Activated B cell treated with CpG ODN at 0.5 μM for 24 hours (primary cell): ENCODE measurements at regions of chr13 and their contacts with region 1.

Region 1: DNA sequence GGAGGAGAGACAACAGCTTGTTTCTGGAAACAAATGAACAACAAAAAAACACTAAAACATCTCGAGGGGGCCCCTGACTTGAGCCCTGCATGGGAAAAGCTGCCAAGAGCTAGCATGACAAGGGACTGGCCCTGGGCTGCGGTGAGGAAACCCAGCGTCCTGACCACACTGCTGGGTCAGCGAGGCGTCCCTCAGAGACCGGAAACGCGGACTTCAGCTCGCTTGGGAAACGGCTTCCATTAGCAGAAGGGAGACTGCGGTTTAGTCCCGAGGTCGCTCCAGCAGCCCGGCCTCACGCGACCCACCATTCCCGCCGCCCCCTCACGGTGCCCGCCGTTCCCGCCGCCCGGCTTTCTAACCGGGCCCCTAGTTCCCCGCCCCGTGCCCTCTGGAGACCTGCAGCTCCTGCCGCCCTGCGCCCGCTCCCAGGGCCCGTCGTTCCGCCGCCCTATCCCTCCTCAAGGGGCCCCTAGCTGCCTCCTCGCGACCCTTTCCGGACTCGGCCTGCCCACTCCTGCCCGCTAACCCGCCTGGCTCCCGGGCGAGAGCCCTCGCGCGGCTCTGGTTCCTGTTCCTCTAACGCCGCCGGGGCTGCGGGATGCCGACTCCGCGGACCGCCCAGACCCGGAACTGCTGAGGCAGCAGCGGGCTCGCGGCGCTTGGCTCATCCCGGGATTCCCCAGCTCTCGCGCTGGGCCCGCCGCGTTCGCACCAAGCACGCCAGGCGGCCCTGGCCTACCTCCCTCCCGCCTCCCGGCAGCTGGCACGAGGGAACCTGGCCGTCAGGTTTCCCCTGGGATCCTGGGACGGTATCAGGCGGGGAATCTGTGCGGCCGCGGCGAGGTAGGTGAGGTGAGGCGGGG is at the start of gene CCDC122:
- DNase-seq: peak; percentile 83
- ATAC-seq: peak; percentile 86
- H3K4me3 Mint-ChIP-seq: peak within 1 kb of the TSS; percentile 93
- H3K27ac Mint-ChIP-seq: peak within 1 kb of the TSS; percentile 93
- H3K4me1 Mint-ChIP-seq: peaks cover 32% of the 10 kb centered on the region
- H3K27me3 Mint-ChIP-seq: no peaks in the 10 kb centered on the region
- CTCF ChIP-seq: no peak
- total RNA-seq, gene CCDC122: 7.1 and 8.0 TPM in 2 replicates

Region 2: GRCh38 chr13:42048682-42049453 is 1830.3 kb before region 1 on chr13:
- CTCF ChIA-PET with region 1: no interaction called
- POLR2A ChIA-PET with region 1: no interaction called
- intact Hi-C with region 1: loop called (anchors 5 kb)
- DNase-seq: peak; percentile 50
- ATAC-seq: peak; percentile 76
- H3K4me3 Mint-ChIP-seq: peak overlapping the region; percentile 85
- H3K27ac Mint-ChIP-seq: no peak overlapping the region
- H3K4me1 Mint-ChIP-seq: peaks cover 12% of the 10 kb centered on the region
- H3K27me3 Mint-ChIP-seq: peaks cover 34% of the 10 kb centered on the region
- CTCF ChIP-seq: no peak

Region 3: DNA sequence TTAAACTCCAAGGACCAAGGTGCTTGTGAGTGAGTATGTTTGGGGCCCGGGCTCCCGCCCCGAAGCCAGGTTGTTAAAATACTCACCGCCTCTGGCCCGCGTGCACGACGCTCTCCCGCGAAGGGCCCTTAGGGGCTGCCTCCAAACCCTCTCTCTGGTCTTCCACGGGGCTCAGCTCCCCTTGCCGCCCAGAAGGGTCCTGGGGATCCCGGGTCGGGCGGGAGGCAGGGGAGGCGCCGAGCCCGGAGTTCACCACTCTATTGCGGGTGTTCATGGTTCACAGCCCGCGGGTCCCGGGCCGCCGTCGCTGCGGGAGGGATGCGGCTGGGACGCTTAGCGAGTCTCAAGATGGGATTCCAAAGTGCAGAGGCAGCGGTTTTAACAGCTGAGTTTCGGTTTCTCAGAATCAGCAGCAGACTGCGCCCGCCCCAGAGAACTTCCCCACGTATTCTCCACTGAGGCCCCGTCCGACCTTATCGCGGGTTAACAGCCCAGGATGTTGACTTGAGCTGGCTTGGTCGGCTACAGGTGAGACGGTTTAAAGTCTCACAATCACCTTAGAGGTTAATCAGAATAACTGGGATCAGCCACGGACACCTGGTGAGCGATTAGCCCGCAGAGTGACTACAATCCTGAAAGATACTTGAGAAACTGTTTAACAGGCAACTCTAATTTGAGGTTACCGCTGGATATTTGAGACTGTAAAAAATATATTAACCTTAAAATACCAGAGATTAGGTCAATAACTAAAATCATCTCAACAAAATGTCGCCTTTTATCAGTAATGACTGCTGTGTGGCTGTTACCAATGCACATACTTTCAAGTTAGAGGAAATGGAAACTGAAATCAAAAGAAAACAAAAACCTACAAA is 887.0 kb before region 1 on chr13 and contains the start of gene EPSTI1:
- CTCF ChIA-PET with region 1: no interaction called
- POLR2A ChIA-PET with region 1: interaction called, 10 read pairs
- intact Hi-C with region 1: loop called (anchors 1 kb)
- DNase-seq: peak; percentile 69
- ATAC-seq: peak; percentile 85
- H3K4me3 Mint-ChIP-seq: peak within 1 kb of the TSS; percentile 92
- H3K27ac Mint-ChIP-seq: peak within 1 kb of the TSS; percentile 99
- H3K4me1 Mint-ChIP-seq: peaks cover 58% of the 10 kb centered on the region
- H3K27me3 Mint-ChIP-seq: no peaks in the 10 kb centered on the region
- CTCF ChIP-seq: no peak
- total RNA-seq, gene EPSTI1: 30.6 and 32.8 TPM in 2 replicates

Region 4: GRCh38 chr13:43894438-43894837 is 15.3 kb after region 1 on chr13:
- CTCF ChIA-PET with region 1: interaction called, 3 read pairs
- POLR2A ChIA-PET with region 1: interaction called, 6 read pairs
- intact Hi-C with region 1: loop called (anchors 1 kb)
- DNase-seq: no peak
- ATAC-seq: no peak
- H3K4me3 Mint-ChIP-seq: no peak overlapping the region
- H3K27ac Mint-ChIP-seq: no peak overlapping the region
- H3K4me1 Mint-ChIP-seq: no peaks in the 10 kb centered on the region
- H3K27me3 Mint-ChIP-seq: no peaks in the 10 kb centered on the region
- CTCF ChIP-seq: no peak

Region 5: DNA sequence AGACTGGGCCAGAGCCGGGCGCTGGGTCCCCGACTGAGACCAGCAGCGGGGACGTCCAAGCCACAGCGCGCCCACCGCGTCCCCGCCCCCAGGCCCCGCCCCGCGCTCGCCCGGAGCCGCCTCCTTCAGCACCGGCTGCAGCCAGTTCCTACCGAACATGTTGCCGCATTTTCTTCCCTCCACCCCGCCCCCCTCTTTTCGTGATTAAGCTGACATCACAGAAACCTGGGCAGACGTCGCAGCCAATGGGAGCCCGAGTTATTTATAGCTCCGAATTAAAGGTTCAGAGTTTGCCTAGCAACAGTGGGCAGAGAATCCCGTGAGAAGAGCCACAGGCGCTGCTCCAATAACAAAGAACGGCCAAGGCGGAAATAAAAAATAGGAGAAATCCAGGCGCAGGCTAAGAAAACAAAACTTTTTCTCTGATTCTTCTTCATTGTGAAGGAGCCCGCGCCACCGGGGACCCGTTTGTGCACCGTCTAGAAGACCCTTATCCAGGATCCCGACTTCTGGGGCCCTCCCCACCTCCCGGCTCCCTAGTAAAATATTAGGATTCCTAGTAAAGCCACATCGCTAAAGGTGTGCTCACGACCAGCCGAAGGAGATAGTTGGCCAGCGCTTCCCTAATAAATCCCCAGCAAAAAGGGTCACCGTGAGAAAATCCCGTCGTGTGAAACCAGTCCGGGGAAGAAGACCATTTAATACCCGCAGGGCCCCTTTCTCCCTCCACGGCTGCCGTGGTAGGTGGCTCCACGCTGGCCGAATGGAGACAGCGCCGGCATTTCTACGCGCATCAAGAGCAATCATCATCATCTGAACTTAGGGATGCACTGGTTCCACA is 556.2 kb after region 1 on chr13:
- CTCF ChIA-PET with region 1: no interaction called
- POLR2A ChIA-PET with region 1: interaction called, 12 read pairs
- intact Hi-C with region 1: loop called (anchors 1 kb)
- DNase-seq: peak; percentile 78
- ATAC-seq: peak; percentile 90
- H3K4me3 Mint-ChIP-seq: peak overlapping the region; percentile 85
- H3K27ac Mint-ChIP-seq: peak overlapping the region; percentile 69
- H3K4me1 Mint-ChIP-seq: peaks cover 28% of the 10 kb centered on the region
- H3K27me3 Mint-ChIP-seq: peaks cover 8% of the 10 kb centered on the region
- CTCF ChIP-seq: no peak